ENCODE measurements at regions of chr9 and their contacts with region 1.

Region 1: GRCh38 chr9:33225319-33226149 is 14.4 kb upstream of the SPINK4 start:
- DNase-seq: peak; percentile 45
- CTCF ChIP-seq: peak; percentile 63

Region 2: DNA sequence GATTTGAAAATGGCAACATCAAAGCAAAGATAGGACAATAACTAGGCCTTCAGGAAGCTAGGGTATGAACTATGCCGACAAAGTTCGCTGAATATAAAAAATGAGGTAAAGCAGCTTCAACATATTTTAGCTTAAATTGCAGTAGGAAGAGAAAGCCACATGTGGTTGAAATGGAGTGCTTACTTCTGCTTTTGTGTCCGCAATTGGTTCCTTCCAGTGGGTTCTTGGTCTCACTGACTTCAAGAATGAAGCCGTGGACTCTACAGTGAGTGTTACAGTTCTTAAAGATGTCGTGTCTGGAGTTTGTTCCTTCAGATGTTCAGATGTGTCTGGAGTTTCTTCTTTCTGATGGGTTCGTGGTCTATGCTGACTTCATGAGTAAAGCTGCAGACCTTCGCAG is 319.3 kb before region 1 on chr9:
- CTCF ChIA-PET with region 1: no interaction called
- POLR2A ChIA-PET with region 1: no interaction called
- DNase-seq: no peak
- CTCF ChIP-seq: no peak

Region 3: GRCh38 chr9:33076358-33077004 is 149.1 kb before region 1 on chr9 and contains the start of gene SMU1:
- CTCF ChIA-PET with region 1: interaction called, 31 read pairs
- POLR2A ChIA-PET with region 1: no interaction called
- DNase-seq: peak; percentile 97
- CTCF ChIP-seq: no peak

Region 4: DNA sequence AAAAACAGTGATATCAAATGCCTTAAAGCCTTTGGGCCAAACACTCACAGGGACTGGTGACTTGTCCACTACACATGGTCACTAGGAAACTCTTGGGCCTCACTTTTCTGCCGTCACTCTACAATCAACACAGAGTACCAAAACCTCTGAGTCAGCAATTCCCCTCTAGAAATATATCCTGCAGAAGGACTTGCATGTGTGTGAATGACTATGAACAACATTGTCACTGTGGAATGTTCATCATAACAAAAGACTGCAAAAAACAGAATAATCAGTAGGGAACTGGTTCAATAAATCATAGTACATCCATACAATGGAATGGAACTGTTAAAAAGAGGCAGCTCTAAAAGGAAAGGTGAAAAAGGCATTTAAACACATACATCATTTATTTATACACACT is 104.9 kb before region 1 on chr9:
- CTCF ChIA-PET with region 1: interaction called, 17 read pairs
- POLR2A ChIA-PET with region 1: no interaction called
- DNase-seq: no peak
- CTCF ChIP-seq: no peak

Region 5: GRCh38 chr9:33139421-33140228 is 85.9 kb before region 1 on chr9:
- CTCF ChIA-PET with region 1: interaction called, 16 read pairs
- POLR2A ChIA-PET with region 1: no interaction called
- DNase-seq: no peak
- CTCF ChIP-seq: no peak

Region 6: GRCh38 chr9:33167046-33167808 is 58.3 kb before region 1 on chr9 and contains the start of gene B4GALT1:
- CTCF ChIA-PET with region 1: interaction called, 15 read pairs
- POLR2A ChIA-PET with region 1: no interaction called
- DNase-seq: peak; percentile 95
- CTCF ChIP-seq: no peak

Region 7: DNA sequence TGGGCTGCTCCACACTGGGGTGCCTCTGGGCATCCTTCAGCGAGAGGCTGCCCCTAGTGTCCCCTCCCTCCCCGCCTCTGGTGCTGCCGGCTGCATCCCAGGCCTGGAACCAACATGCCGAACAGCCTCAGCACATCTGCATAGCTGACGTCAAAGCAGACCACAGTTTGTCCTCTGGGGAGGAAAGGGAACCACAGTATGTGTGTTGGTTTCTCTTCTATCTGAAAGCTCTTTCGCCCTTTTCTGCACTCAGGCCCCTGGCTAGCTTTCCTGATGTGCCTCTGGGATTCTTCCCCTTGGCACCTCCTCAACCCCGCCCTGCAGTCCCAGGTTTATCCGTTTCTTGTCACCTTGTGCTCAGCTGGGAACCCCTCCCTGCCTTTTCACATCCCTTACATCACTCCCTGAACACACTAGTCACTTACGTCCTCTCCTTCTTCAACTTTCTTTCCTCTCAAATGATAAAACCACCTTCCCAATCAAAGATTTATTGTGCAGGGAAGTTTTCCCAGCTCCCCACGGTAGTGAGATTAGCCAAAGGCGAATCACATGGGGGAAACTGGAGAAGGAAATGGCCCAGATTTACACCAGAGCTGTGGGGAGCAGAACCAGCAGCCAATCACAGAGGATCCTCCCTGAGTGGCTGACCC is 22.9 kb before region 1 on chr9:
- CTCF ChIA-PET with region 1: interaction called, 21 read pairs
- POLR2A ChIA-PET with region 1: no interaction called
- DNase-seq: peak; percentile 79
- CTCF ChIP-seq: peak; percentile 8

Measured in GM10248 (cell line).